ENCODE measurements at regions of chr19 and their contacts with region 1.

Region 1: GRCh38 chr19:55653758-55654539 is 886 bp upstream of the U2AF2 start:
- DNase-seq: peak; percentile 100
- H3K4me3 ChIP-seq: peak overlapping the region; percentile 86 to 87
- H3K4me3 Mint-ChIP-seq: peak overlapping the region; percentile 92 to 99 (median 94)
- H3K27ac ChIP-seq: peak overlapping the region; percentile 99
- H3K27ac Mint-ChIP-seq: peak overlapping the region; percentile 96 to 100 (median 98)
- H3K4me1 ChIP-seq: peaks cover 42% of the 10 kb centered on the region
- H3K4me1 Mint-ChIP-seq: peaks cover 19 to 58% (median 32%) of the 10 kb centered on the region in 4 donors
- H3K27me3 ChIP-seq: no peaks in the 10 kb centered on the region
- H3K27me3 Mint-ChIP-seq: no peaks in the 10 kb centered on the region

Region 2: DNA sequence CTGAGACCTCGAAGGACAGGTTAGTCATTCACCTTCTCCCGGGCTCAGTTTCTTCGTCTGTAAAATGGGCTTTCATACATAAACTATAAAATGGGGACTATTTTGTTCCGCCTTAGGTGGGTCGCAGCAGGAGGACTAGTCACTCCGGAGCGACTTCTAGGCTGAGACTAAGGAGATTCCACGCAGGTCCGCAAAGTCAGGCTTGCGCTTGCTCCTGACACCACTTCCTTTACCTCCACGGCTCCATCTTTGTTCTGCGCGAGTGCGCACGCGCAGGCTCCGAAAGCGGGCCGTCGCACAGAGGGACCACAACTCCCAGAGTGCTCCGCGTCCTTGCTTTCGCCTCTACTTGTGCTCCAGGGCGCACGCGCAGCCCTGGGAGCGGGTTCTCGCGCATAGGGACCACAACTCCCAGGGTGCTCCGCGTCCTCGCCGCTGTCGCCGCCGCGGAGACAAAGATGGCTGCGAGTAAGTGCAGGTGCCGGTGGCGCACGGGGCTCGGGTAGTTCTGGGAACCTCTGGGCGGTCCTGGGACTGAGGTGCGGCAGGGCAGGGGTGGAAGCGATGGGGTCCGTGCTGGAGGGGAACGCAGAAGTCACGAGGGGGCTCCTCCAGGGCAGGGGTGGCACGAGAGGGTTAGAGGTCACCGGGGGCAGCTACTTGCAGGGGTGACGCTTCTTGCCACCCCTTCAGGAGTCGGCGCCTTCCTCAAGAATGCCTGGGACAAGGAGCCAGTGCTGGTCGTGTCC is 1551.4 kb before region 1 on chr19 and contains the start of gene NDUFA3:
- CTCF ChIA-PET with region 1: no interaction called
- POLR2A ChIA-PET with region 1: no interaction called
- intact Hi-C with region 1: loop called (anchors 10 kb)
- DNase-seq: peak; percentile 96 to 99 (median 98)
- H3K4me3 ChIP-seq: peak within 1 kb of the TSS; percentile 54 to 83
- H3K4me3 Mint-ChIP-seq: peak within 1 kb of the TSS; percentile 95 to 100 (median 97)
- H3K27ac ChIP-seq: peak within 1 kb of the TSS; percentile 65
- H3K27ac Mint-ChIP-seq: peak within 1 kb of the TSS; percentile 81 to 98 (median 96)
- H3K4me1 ChIP-seq: peaks cover 17% of the 10 kb centered on the region
- H3K4me1 Mint-ChIP-seq: peaks cover 14 to 29% (median 19%) of the 10 kb centered on the region in 4 donors
- H3K27me3 ChIP-seq: no peaks in the 10 kb centered on the region
- H3K27me3 Mint-ChIP-seq: no peaks in the 10 kb centered on the region
- total RNA-seq, gene NDUFA3: 135 to 137 TPM

Region 3: GRCh38 chr19:55117636-55118391 is 536.1 kb before region 1 on chr19 and contains the start of gene PPP1R12C:
- CTCF ChIA-PET with region 1: no interaction called
- POLR2A ChIA-PET with region 1: interaction called, 3 read pairs
- intact Hi-C with region 1: loop called (anchors 1 kb)
- DNase-seq: peak; percentile 94 to 97 (median 96)
- H3K4me3 ChIP-seq: peak within 1 kb of the TSS; percentile 96 to 97
- H3K4me3 Mint-ChIP-seq: peak within 1 kb of the TSS; percentile 98 to 100 (median 99)
- H3K27ac ChIP-seq: peak within 1 kb of the TSS; percentile 73
- H3K27ac Mint-ChIP-seq: peak within 1 kb of the TSS; percentile 96 to 99 (median 98)
- H3K4me1 ChIP-seq: peaks cover 31% of the 10 kb centered on the region
- H3K4me1 Mint-ChIP-seq: peaks cover 15 to 53% (median 34%) of the 10 kb centered on the region in 4 donors
- H3K27me3 ChIP-seq: no peaks in the 10 kb centered on the region
- H3K27me3 Mint-ChIP-seq: peaks cover 3 to 6% of the 10 kb centered on the region in 2 donors
- total RNA-seq, gene PPP1R12C: 165 TPM

Region 4: GRCh38 chr19:55339048-55339888 is 314.7 kb before region 1 on chr19 and contains the start of gene KMT5C:
- CTCF ChIA-PET with region 1: no interaction called
- POLR2A ChIA-PET with region 1: interaction called, 10 read pairs
- intact Hi-C with region 1: loop called (anchors 1 kb)
- DNase-seq: peak; percentile 100
- H3K4me3 ChIP-seq: peak within 1 kb of the TSS; percentile 66 to 74
- H3K4me3 Mint-ChIP-seq: peak within 1 kb of the TSS; percentile 90 to 96 (median 93)
- H3K27ac ChIP-seq: peak within 1 kb of the TSS; percentile 90
- H3K27ac Mint-ChIP-seq: peak within 1 kb of the TSS; percentile 97 to 100 (median 99)
- H3K4me1 ChIP-seq: peaks cover 24% of the 10 kb centered on the region
- H3K4me1 Mint-ChIP-seq: peaks cover 9 to 35% (median 18%) of the 10 kb centered on the region in 4 donors
- H3K27me3 ChIP-seq: no peaks in the 10 kb centered on the region
- H3K27me3 Mint-ChIP-seq: peaks cover 1 to 12% of the 10 kb centered on the region in 2 donors
- total RNA-seq, gene KMT5C: 23.1 to 23.5 TPM

Region 5: DNA sequence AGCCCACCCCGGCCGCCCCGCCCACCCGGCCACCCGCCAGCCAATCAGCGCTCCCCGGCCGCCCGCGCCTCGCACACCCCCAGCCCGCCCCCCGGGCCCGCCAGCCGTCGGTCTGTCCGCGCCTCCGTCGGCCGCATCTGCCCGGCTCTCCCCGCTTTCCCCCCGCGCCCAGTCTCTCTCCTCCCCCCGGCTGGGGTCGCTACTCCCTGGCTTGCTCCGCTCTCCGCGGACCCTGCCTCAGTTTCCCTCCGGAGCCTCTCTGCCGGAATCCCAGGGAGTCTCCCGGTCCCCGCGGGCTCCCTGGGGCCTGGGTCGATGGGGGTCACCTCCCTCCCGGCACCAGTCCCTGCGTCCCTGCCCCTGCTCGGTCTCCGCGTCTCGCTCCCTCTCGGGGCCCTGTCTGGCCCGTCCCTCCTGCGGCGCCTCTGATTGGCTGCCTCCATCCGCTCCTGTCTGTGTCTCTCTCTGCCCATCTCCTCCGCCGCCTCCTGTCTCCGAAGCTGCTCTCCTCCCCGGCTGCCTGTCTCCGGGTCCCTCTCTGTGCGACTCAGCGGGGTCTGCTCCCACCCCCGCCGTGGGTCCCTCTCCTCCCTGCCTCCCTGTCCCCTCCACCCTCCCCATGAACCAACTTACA is 284.2 kb before region 1 on chr19:
- CTCF ChIA-PET with region 1: no interaction called
- POLR2A ChIA-PET with region 1: no interaction called
- intact Hi-C with region 1: no loop called
- DNase-seq: peak in 2 of 5 donors; percentile 26 to 32
- H3K4me3 ChIP-seq: no peak overlapping the region
- H3K4me3 Mint-ChIP-seq: peak overlapping the region; percentile 60 to 85 (median 75)
- H3K27ac ChIP-seq: no peak overlapping the region
- H3K27ac Mint-ChIP-seq: peak overlapping the region in 1 of 7 donors; percentile 57
- H3K4me1 ChIP-seq: peaks cover 7% of the 10 kb centered on the region
- H3K4me1 Mint-ChIP-seq: peaks cover 6 to 13% (median 9%) of the 10 kb centered on the region in 4 donors
- H3K27me3 ChIP-seq: peaks cover 23% of the 10 kb centered on the region
- H3K27me3 Mint-ChIP-seq: peaks cover 29 to 37% of the 10 kb centered on the region in 2 donors

Region 6: GRCh38 chr19:55599468-55600279 is 54.3 kb before region 1 on chr19 and contains the start of gene FIZ1:
- CTCF ChIA-PET with region 1: no interaction called
- POLR2A ChIA-PET with region 1: interaction called, 30 read pairs
- intact Hi-C with region 1: loop called (anchors 1 kb)
- DNase-seq: peak; percentile 96 to 98 (median 97)
- H3K4me3 ChIP-seq: peak within 1 kb of the TSS; percentile 93 to 99
- H3K4me3 Mint-ChIP-seq: peak within 1 kb of the TSS; percentile 98 to 100 (median 98)
- H3K27ac ChIP-seq: peak within 1 kb of the TSS; percentile 89
- H3K27ac Mint-ChIP-seq: peak within 1 kb of the TSS; percentile 96 to 100 (median 99)
- H3K4me1 ChIP-seq: peaks cover 28% of the 10 kb centered on the region
- H3K4me1 Mint-ChIP-seq: peaks cover 22 to 38% (median 25%) of the 10 kb centered on the region in 4 donors
- H3K27me3 ChIP-seq: no peaks in the 10 kb centered on the region
- H3K27me3 Mint-ChIP-seq: no peaks in the 10 kb centered on the region
- total RNA-seq, gene FIZ1: 20.8 to 26.4 TPM

Region 7: GRCh38 chr19:55632463-55632834 is 21.5 kb before region 1 on chr19:
- CTCF ChIA-PET with region 1: interaction called, 29 read pairs
- POLR2A ChIA-PET with region 1: interaction called, 91 read pairs
- intact Hi-C with region 1: loop called (anchors 1 kb)
- DNase-seq: peak; percentile 85 to 95 (median 88)
- H3K4me3 ChIP-seq: no peak overlapping the region
- H3K4me3 Mint-ChIP-seq: peak overlapping the region; percentile 4 to 68 (median 52)
- H3K27ac ChIP-seq: no peak overlapping the region
- H3K27ac Mint-ChIP-seq: peak overlapping the region; percentile 69 to 98 (median 91)
- H3K4me1 ChIP-seq: peaks cover 41% of the 10 kb centered on the region
- H3K4me1 Mint-ChIP-seq: peaks cover 30 to 55% (median 43%) of the 10 kb centered on the region in 4 donors
- H3K27me3 ChIP-seq: no peaks in the 10 kb centered on the region
- H3K27me3 Mint-ChIP-seq: no peaks in the 10 kb centered on the region

Region 8: GRCh38 chr19:55674841-55675660 is 21.1 kb after region 1 on chr19 and contains the start of gene EPN1:
- CTCF ChIA-PET with region 1: interaction called, 11 read pairs
- POLR2A ChIA-PET with region 1: interaction called, 17 read pairs
- intact Hi-C with region 1: loop called (anchors 1 kb)
- DNase-seq: peak; percentile 94 to 98 (median 97)
- H3K4me3 ChIP-seq: peak within 1 kb of the TSS; percentile 79 to 98
- H3K4me3 Mint-ChIP-seq: peak within 1 kb of the TSS; percentile 94 to 100 (median 97)
- H3K27ac ChIP-seq: peak within 1 kb of the TSS; percentile 94
- H3K27ac Mint-ChIP-seq: peak within 1 kb of the TSS; percentile 94 to 100 (median 99)
- H3K4me1 ChIP-seq: peaks cover 63% of the 10 kb centered on the region
- H3K4me1 Mint-ChIP-seq: peaks cover 32 to 74% (median 55%) of the 10 kb centered on the region in 4 donors
- H3K27me3 ChIP-seq: no peaks in the 10 kb centered on the region
- H3K27me3 Mint-ChIP-seq: no peaks in the 10 kb centered on the region
- total RNA-seq, gene EPN1: 53.9 to 56.9 TPM